HEK293 (cell line): ENCODE measurements at regions of chr3 and their contacts with region 1.

Region 1: DNA sequence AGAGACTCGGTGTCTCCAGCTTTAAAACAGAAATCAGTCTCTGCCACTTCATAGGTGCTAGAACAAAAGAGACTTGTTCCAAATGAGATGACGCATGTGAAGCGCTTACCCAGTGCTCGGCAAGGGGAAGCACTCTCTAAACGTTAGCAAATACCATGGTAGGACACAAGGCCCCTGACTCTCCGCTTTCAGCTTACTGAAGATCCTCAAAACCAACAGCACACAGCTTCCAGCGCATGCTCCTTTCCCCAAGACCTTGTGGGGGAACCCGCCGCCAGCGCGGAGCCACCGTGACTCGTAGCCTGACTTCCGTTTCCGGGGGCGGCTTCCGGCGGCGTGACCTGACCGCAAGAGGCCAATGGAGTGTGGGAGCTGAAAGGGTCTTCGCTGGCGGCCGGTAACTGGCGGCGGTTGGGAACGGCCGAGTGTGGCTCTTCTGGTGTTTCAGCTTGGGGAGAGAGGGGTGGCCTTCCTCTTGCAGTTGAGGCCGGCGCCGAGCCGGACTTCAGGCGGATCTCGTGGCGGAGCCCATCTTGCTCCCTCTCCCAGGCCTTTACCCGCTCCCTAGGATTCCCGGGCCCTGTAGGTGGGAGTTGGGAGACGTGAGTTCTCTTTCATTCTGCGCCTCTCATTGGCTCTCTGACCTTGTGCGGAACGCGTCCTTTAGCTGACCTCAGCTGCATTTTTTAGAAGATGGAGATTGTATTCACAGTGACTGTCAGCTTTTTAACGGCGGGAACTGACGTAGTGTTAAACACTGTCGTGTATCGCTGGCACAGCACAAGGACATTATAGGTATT is at the start of gene THUMPD3:
- H3K4me3 ChIP-seq: peak within 1 kb of the TSS; percentile 77
- H3K27ac ChIP-seq: peak within 1 kb of the TSS; percentile 93
- H3K4me1 ChIP-seq: peaks cover 3% of the 10 kb centered on the region; the same call in 1 of the 2 replicates
- CTCF ChIP-seq: no peak; the same call in 1 of the 2 replicates

Region 2: GRCh38 chr3:9373465-9373864 is 10.5 kb after region 1 on chr3:
- CTCF ChIA-PET with region 1: no interaction called
- POLR2A ChIA-PET with region 1: interaction called, 15 read pairs
- H3K4me3 ChIP-seq: no peak overlapping the region
- H3K27ac ChIP-seq: no peak overlapping the region
- H3K4me1 ChIP-seq: no peaks in the 10 kb centered on the region
- CTCF ChIP-seq: no peak

Region 3: DNA sequence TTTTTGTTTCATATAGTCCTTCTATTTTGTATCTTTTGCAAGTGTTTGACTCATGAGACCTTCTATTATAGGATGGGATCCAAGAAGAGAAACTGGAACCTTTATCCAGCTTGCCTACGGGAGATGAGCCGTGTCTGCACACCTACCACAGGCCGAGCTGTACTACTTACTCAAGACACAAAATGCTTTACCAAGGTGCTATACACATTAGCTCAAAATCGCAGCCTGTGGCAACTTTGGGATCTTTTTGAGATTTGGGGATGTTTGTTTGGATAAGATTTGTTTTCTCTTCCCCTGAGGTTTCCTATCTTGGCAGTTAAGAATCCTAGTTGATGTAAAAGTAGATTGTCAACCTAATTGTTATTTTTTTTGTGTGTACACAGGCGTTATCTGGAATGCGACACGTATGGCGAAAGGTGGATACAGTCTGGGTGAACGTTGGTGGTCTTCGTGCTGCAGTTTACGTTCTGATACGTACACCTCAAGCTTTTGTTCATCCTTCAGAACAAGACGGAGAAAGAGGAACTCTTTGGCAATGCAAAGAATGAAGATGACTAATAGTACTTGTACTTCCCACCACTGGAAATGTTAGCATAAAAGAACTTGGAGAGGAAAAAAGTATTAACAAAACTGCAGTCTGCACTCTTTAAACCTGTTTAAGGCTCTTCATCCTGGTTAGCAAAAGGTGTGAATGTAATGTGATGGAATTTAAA is 21.4 kb after region 1 on chr3:
- CTCF ChIA-PET with region 1: interaction called, 4 read pairs
- POLR2A ChIA-PET with region 1: interaction called, 15 read pairs
- H3K4me3 ChIP-seq: no peak overlapping the region
- H3K27ac ChIP-seq: 0 out of 2 replicates have a peak overlapping the region, but pooled peaks have one; percentile 8
- H3K4me1 ChIP-seq: no peaks in the 10 kb centered on the region
- CTCF ChIP-seq: no peak

Region 4: DNA sequence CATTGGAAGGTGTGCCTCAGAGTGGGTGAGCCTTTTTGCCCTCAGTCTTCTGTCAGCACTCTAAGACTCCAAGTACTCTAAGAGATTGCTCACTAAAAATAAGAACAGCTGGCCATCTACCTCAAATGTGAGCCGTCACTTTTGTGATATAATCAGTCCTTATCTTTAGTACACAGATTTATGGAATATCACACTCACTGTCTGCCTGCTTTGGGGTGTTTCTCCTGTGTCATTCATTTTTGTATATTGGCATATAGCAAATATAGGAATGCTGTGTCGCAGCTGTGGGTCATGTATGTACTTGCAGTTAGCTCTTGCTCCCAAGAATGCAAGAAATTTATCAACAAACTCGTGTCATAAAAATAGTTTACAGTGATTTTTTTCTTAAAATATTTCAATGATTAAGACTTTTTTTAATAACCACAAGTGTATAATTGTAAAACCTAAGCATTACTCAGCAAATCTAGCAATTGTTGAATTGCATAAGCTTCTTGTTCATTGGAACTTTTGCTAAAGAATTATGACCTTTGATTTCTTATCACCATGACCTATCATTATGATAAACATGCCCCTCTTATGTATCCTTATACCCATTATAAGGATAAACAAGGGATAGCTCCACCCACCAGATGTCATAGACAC is 53.3 kb after region 1 on chr3:
- CTCF ChIA-PET with region 1: interaction called, 10 read pairs
- POLR2A ChIA-PET with region 1: interaction called, 3 read pairs
- H3K4me3 ChIP-seq: no peak overlapping the region
- H3K27ac ChIP-seq: no peak overlapping the region
- H3K4me1 ChIP-seq: peaks cover 20% of the 10 kb centered on the region
- CTCF ChIP-seq: no peak